Adrenal gland (tissue), 19 donors: ENCODE measurements at regions of chr18 and their contacts with region 1.

Region 1: DNA sequence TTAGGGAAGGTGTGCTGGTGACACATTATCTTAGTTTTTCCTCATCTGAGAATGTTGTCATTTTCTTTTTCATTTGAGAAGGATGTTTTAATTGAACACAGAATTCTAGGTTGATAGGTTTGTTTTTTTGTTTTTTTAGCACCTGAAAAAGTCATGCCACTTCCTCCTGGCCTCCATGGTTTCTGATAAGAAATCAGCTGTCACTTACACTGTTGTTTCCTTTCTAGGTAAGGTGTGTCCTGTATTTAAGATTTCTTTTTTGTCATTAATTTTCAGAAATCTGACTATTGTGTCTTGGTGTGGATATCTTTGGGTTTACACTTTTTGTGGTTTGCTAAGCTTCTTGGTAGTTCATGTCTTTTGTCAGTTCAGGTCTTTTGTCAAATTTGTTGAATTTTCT is 99.3 kb downstream of the ROCK1 start:
- DNase-seq: no peak
- H3K4me3 ChIP-seq: no peak overlapping the region
- H3K27ac ChIP-seq: no peak overlapping the region
- H3K4me1 ChIP-seq: no peaks in the 10 kb centered on the region
- H3K27me3 ChIP-seq: no peaks in the 10 kb centered on the region
- CTCF ChIP-seq: no peak
- POLR2A ChIP-seq: no peak

Region 2: DNA sequence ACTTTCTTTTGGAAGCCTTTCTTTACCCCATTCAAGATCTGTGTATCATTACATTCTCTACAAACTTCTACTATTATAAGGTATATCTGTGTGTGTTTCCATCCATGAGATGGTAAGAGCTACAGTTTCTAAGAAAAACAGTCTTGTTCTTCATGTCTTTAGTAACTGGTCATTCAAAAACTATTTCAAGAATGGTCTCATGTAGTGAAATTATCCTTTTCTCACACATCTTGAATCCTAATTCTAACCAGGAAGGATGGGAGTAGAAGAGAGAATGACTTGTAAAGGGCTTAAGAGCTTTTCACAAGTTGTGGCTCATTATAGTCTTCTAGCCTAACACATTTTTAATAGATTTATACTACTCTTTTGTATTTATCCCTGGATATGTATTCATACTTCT is 52.0 kb after region 1 on chr18:
- intact Hi-C with region 1: loop called in 1 of 2 experiments (anchors 10 kb)
- DNase-seq: no peak
- H3K4me3 ChIP-seq: no peak overlapping the region
- H3K27ac ChIP-seq: no peak overlapping the region
- H3K4me1 ChIP-seq: no peaks in the 10 kb centered on the region
- H3K27me3 ChIP-seq: no peaks in the 10 kb centered on the region
- CTCF ChIP-seq: no peak
- POLR2A ChIP-seq: no peak